Activated naive CD8-positive, alpha-beta T cell treated with anti-CD3 and anti-CD28 coated beads, Interleukin-2, amount 10 ng/mL, durations not matched to agents 7 days and 5 days (primary cell): ENCODE measurements at regions of chr19 and their contacts with region 1.

Region 1: DNA sequence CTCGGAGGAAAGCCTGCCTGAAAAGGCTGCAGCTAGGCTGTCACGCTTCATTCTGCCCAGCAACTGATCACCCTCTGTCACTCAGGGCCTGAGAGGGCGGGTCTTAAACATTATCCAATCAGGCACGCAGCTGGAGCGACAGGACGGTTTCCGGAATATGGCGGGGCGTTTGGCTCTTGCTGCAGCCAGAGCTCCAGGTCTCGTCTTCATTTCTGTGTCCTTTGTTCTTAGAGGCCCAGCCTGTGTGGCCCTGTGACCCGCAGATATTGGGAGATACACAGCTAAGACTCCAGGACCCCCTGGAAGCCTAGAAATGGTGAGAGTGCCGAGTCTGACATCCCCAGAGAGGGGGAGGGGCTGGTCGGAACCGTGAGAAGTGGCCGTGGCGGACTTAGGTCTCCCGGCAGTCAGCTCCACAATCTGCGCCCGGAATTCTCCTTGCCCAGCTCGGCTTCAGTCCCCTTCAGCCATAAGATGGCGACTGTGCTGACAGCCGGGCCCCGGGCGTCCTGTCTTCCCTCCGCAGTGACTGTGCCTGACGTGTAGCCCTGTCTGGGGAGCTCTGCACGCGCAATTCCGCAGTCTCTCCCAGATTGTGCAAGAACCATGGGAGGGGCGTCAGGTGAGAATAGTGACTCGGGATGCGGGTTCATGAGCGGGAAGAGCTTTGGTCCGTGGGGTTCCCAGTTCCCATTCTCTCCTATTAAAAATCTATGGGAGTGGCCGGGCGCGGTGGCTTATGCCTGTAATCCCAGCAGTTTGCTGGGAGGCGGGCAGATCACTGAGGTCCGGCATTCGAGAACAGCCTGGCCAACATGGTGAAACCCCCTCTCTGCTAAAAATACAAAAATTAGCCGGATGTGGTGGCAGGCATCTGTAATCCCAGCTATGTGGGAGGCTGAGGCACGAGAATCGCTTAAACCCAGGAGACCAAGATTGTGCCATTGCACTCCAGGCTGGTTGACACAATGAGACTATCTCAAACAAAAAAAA is at the start of gene ZNF429:
- DNase-seq: peak; percentile 79
- ATAC-seq: peak; percentile 100
- H3K4me3 Mint-ChIP-seq: peak within 1 kb of the TSS; percentile 99
- H3K27ac Mint-ChIP-seq: peak within 1 kb of the TSS; percentile 99
- H3K4me1 Mint-ChIP-seq: peaks cover 10% of the 10 kb centered on the region
- H3K27me3 Mint-ChIP-seq: no peaks in the 10 kb centered on the region
- total RNA-seq, gene ZNF429: 14.3 to 14.8 TPM

Region 2: DNA sequence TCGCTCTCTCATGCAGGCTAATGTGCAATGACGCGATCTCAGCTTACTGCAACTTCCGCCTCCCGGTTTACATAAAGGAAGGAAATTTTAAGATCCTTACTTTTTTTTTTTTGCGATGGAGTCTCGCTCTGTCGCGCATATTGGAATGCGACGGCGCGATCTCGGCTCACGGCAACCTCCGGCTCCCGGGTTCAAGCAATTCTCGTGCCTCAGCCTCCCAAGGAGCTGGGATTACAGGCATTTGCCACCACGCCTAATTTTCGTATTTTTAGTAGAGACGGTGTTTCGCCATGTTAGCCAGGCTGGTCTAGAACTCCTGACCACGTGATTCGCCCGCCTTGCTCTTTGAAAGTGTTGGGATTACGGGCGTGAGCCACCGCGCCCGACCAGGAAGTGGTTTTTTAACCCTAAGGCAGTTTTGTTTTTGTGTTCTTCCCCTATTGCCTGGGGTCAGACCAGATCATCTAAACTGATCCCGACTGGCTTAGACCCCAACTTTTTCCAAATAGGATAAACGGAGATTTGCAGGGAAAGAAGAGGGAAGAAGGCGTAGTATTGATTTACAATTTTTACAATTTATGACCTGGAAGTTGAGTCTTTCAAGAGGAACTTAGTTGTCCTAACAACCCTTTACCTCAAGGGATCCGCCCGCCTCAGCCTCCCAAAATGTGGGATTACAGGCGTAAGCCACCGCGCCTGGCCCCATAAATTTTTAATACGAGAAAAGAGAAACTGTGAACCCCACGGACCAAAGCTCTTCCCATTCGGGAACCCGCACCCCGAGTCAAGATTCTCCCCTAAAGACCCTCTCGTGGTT is 1082.2 kb before region 1 on chr19:
- POLR2A ChIA-PET with region 1: interaction called, 11 read pairs
- DNase-seq: peak; percentile 52
- ATAC-seq: no peak
- H3K4me3 Mint-ChIP-seq: peak overlapping the region; percentile 96
- H3K27ac Mint-ChIP-seq: peak overlapping the region; percentile 98
- H3K4me1 Mint-ChIP-seq: peaks cover 8% of the 10 kb centered on the region
- H3K27me3 Mint-ChIP-seq: no peaks in the 10 kb centered on the region

Region 3: GRCh38 chr19:21020298-21021227 is 485.2 kb before region 1 on chr19 and contains the start of gene ZNF430:
- POLR2A ChIA-PET with region 1: interaction called, 14 read pairs
- DNase-seq: peak; percentile 83
- ATAC-seq: peak; percentile 97
- H3K4me3 Mint-ChIP-seq: peak within 1 kb of the TSS; percentile 99
- H3K27ac Mint-ChIP-seq: peak within 1 kb of the TSS; percentile 100
- H3K4me1 Mint-ChIP-seq: peaks cover 24% of the 10 kb centered on the region
- H3K27me3 Mint-ChIP-seq: no peaks in the 10 kb centered on the region
- total RNA-seq, gene ZNF430: 33.9 to 35.0 TPM

Region 4: GRCh38 chr19:21396893-21397572 is 108.7 kb before region 1 on chr19 and contains the start of gene ZNF493:
- POLR2A ChIA-PET with region 1: interaction called, 10 read pairs
- DNase-seq: peak; percentile 84
- ATAC-seq: peak; percentile 99
- H3K4me3 Mint-ChIP-seq: peak within 1 kb of the TSS; percentile 99
- H3K27ac Mint-ChIP-seq: peak within 1 kb of the TSS; percentile 97
- H3K4me1 Mint-ChIP-seq: peaks cover 3% of the 10 kb centered on the region
- H3K27me3 Mint-ChIP-seq: no peaks in the 10 kb centered on the region
- total RNA-seq, gene ZNF493: 34.5 to 39.4 TPM

Region 5: DNA sequence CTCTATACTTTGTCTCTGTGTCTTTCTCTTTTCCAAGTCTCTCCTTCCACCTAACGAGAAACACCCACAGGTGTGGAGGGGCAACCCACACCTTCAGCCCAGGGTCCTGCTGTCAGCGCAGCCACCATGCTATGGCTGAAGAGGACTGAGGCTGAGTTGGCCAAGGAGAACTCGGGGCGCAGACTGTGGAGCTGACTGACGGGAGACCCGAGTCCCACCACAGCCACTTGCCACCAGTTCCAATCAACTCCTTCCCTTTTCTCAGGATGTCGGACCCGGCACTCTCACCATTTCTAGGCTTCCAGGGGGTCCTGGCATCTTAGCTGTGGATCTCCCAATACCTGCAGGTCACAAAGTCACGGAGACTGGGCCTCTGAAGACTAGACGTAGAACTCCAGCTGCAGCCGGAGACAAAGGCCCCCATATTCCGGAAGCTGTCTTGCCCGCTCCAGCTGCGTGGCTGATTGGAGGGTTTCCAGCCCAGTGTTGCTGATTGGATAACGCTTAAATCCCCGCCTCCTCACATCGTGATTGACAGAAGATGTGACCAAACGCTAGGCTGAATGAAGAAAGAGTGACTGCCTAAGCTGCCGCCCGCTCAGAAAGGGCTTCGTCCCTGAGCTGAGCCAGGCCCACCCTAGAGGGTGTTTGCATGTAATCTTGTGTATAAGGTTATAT is 63.2 kb after region 1 on chr19:
- POLR2A ChIA-PET with region 1: interaction called, 18 read pairs
- DNase-seq: peak; percentile 63
- ATAC-seq: peak; percentile 97
- H3K4me3 Mint-ChIP-seq: peak overlapping the region; percentile 93
- H3K27ac Mint-ChIP-seq: peak overlapping the region; percentile 97
- H3K4me1 Mint-ChIP-seq: peaks cover 1% of the 10 kb centered on the region
- H3K27me3 Mint-ChIP-seq: no peaks in the 10 kb centered on the region

Region 6: DNA sequence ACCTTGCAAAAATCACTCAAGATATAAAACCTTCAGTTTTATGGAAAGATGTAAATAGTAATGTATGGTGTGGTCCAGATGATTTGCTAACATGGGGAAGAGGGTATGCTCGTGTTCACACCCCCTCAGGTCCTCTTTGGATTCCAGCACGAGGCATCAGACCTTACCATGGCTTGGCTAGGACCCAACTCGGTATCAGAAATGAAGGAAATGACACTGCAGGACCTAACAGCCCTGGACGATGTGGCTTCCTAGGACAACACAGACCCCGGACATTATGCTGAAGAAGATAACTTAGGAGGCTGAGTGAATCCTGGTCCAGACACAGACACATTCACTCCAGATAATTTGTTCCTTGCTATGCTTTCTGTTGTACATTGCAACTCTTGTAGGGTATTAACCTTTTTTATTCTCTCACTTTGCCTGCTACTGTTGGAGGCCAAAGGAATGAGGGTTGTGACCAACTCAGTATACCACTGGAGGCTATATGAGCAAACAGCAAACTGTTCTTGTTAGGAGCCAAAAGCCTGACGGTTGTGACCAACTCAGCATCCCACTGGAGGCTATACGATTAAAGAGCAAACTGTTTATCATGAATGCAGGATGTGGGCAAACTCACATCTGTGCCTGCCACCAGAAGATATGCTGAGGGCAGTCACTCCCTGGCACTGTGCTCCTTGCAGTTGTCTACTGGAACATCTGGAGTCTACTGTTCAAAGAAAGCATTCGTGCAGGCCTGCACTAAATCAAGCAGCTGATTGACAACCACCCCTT is 121.4 kb after region 1 on chr19:
- POLR2A ChIA-PET with region 1: no interaction called
- DNase-seq: no peak
- ATAC-seq: no peak
- H3K4me3 Mint-ChIP-seq: no peak overlapping the region
- H3K27ac Mint-ChIP-seq: no peak overlapping the region
- H3K4me1 Mint-ChIP-seq: no peaks in the 10 kb centered on the region
- H3K27me3 Mint-ChIP-seq: no peaks in the 10 kb centered on the region

Region 7: GRCh38 chr19:21767065-21767800 is 261.5 kb after region 1 on chr19 and contains the start of gene ZNF100:
- POLR2A ChIA-PET with region 1: interaction called, 14 read pairs
- DNase-seq: peak; percentile 81
- ATAC-seq: peak; percentile 97
- H3K4me3 Mint-ChIP-seq: peak within 1 kb of the TSS; percentile 98
- H3K27ac Mint-ChIP-seq: peak within 1 kb of the TSS; percentile 96
- H3K4me1 Mint-ChIP-seq: peaks cover 15% of the 10 kb centered on the region
- H3K27me3 Mint-ChIP-seq: no peaks in the 10 kb centered on the region
- total RNA-seq, gene ZNF100: 17.7 to 21.9 TPM

Region 8: GRCh38 chr19:21851596-21852345 is 346.0 kb after region 1 on chr19:
- POLR2A ChIA-PET with region 1: interaction called, 13 read pairs
- DNase-seq: peak; percentile 84
- ATAC-seq: peak; percentile 98
- H3K4me3 Mint-ChIP-seq: peak overlapping the region; percentile 92
- H3K27ac Mint-ChIP-seq: peak overlapping the region; percentile 89
- H3K4me1 Mint-ChIP-seq: peaks cover 18% of the 10 kb centered on the region
- H3K27me3 Mint-ChIP-seq: no peaks in the 10 kb centered on the region